GM10248 (cell line): ENCODE measurements at regions of chr9 and their contacts with region 1.

Region 1: DNA sequence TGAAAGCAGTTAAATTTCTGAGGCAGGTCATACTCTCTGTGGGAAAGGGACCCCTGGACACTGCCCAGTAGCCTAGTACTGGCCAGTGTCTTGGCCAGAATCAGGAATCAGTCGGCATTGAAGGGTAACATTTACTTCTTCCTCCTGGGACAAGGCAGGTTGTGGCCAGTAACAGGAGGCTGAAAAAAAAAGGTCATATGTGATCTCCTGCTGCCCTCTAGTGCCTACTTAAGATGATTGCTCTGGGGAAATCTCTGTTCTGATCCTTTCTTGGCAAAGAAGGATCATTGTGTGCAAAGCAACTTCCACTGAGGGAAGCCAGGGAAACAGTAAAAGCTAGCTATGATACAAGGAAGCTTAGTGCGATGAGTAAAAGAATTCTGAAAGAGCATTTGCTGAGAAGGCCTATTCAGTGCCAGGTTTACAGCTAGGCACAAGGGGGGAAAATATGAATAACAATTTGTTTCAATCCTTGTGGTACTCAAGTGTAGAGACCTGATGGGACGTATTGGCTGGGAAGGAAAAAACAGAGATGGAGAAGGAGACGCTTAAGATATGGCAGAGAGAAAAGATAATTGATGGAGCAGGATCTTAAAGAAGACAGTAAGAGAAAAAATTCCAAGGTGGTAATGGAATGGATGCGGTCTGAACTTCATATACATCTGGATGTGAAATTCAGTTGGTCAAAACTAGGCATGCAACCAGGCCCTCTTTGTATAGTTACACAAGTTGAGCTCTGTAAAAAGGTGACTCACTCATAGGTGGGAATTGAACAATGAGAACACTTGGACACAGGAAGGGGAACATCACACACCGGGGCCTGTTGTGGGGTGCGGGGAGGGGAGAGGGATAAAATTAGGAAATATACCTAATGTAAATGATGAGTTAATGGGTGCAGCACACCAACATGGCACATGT is 25.8 kb upstream of the TRIM32 start:
- DNase-seq: peak; percentile 49
- CTCF ChIP-seq: peak; percentile 69

Region 2: GRCh38 chr9:116674210-116674980 is 13.1 kb after region 1 on chr9:
- CTCF ChIA-PET with region 1: interaction called, 17 read pairs
- POLR2A ChIA-PET with region 1: no interaction called
- DNase-seq: no peak
- CTCF ChIP-seq: no peak